Ascending aorta (tissue), 2 donors: ENCODE measurements at regions of chr9 and their contacts with region 1.

Region 1: DNA sequence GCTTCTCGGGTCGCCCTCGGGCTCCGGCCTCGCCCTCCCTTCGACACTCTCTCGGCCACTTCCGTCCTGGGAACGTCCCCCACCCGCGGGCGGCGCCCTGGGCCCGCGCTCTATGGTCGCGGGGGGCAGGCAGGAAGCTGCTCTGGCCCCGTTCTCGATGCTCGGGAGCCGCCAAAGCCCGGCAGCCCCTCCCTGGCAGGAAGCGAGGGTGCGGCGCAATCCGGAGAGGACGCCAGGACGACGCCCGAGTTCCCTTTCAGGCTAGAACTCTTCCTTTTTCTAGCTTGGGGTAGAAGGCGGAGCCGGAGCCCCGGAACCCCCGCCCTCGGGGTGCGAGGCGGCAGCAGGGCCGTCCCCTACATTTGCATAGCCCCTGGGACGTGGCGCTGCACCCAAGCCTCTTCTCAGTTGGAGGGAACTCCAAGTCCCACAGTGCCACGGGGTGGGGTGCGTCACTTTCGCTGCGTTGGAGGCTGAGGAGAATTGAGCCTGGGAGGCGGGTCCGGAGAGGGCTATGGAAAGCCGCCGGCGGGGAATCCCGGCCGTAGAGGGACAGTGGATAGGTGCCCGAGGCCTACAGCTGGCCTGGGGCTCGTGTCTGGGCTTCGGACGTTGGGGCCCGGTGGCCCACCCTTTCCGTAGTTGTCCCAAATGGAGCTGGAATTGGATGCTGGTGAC is at the starts of genes CREB3 and TLN1:
- DNase-seq: peak; percentile 98 to 100
- H3K4me3 ChIP-seq: peak within 1 kb of the TSS; percentile 74 to 81
- H3K27ac ChIP-seq: peak within 1 kb of the TSS; percentile 98 to 99
- H3K4me1 ChIP-seq: peaks cover 18 to 28% of the 10 kb centered on the region in 2 donors
- H3K27me3 ChIP-seq: no peaks in the 10 kb centered on the region
- CTCF ChIP-seq: no peak
- total RNA-seq, gene CREB3: 48.3 TPM
- total RNA-seq, gene TLN1: 735 TPM

Region 2: DNA sequence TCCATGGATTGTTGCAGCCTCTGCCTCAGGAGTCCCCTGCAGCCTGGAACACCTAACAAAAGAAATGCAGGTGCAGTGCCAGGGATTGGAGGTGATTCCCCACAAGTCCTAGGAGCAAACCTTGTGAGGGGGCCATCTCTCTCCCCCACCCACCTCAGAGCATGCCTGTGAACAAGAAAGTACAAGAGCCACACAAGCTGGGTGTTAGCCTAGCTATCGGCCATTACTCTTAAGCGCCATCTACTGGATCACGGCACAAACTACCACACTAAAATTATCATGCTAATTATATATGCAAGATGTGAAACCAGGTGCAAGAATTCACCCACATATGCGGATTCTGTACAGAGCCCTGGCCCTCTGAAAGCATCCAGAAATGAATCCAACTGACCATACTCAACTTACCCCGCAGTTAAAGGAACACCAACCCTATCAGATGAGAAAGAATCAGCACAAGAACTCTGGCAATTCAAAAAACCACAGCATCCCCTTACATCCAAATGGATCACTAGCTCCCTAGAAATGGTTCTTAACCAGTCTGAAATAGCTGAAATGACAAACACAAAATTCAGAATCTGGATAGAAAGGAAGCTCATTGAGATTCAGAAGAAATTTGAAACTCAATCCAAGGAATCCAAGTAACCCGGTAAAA is 1953.4 kb before region 1 on chr9:
- intact Hi-C with region 1: no loop called
- DNase-seq: no peak
- H3K4me3 ChIP-seq: no peak overlapping the region
- H3K27ac ChIP-seq: no peak overlapping the region
- H3K4me1 ChIP-seq: no peaks in the 10 kb centered on the region
- H3K27me3 ChIP-seq: no peaks in the 10 kb centered on the region
- CTCF ChIP-seq: peak; percentile 13 to 73 (median 66)

Region 3: DNA sequence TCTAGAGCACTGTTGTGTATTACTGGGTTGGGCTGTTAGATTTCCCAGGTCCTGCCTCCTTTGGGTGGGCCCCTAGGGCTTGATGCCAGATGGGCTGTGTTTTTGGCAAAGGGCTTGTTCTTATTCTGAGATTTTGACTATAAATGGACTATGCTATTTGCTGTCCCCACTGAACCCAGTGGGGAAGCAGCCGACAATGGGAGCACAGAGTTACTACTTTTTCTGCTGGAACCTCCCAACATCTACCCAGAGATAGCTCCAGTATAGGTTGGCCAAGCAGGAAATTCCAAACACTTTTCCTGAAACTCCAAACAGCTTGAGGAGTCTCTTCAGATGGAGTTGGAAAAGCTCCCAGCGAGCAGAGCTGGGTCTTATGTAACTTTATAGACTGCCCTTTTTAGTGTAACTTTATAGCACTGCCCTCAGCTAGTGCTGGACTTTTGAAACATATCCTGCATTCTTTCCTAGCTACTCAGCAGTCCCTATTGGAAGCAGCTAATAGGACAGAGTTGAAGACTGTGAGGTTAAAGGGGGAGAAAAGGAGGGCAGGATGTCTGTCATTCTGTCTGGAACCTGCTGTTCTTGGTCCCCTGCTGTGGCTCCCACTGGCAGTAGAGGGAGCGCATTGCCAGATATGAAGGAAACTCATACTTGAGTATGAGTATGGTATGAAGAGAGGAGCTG is 221.4 kb before region 1 on chr9:
- intact Hi-C with region 1: loop called (anchors 1 kb)
- DNase-seq: peak; percentile 53 to 94
- H3K4me3 ChIP-seq: peak overlapping the region in 1 of 2 donors; percentile 22
- H3K27ac ChIP-seq: peak overlapping the region; percentile 94 to 95
- H3K4me1 ChIP-seq: peaks cover 13 to 65% of the 10 kb centered on the region in 2 donors
- H3K27me3 ChIP-seq: no peaks in the 10 kb centered on the region
- CTCF ChIP-seq: peak; percentile 39 to 52 (median 42)

Region 4: DNA sequence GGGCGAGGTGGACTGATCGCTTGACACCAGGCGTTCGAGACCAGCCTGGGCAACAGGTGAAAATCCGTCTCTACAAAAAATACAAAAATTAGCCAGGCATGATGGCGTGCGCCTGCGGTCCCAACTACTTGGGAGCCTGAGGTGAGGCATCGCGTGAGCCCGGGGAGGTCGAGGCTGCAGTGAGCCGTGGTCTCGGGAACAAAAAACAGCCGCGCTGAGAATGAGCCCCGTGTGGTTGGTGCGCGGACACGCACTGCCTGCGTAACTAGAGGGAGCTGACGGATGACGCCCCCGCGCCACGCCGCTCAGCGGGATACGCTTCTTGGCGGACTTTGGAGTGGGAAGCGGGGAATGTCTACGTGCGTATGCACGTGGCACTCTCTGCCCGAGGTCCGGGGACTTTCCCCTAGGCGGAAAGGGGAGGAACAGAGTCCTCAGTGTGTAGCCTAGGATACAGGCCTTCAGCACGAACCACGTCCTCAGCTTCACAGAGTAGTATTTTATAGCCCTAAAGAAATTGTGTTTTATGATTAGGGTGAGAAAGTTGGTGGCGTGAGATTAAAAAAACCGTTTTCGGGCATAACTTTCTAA is 74.6 kb before region 1 on chr9 and contains the start of gene RMRP:
- intact Hi-C with region 1: loop called (anchors 1 kb)
- DNase-seq: peak; percentile 90 to 99
- H3K4me3 ChIP-seq: peak within 1 kb of the TSS; percentile 88 to 99
- H3K27ac ChIP-seq: peak within 1 kb of the TSS; percentile 97 to 100
- H3K4me1 ChIP-seq: peaks cover 5 to 35% of the 10 kb centered on the region in 2 donors
- H3K27me3 ChIP-seq: no peaks in the 10 kb centered on the region
- CTCF ChIP-seq: peak; percentile 32 to 56 (median 34)
- total RNA-seq, gene RMRP: 17,070 TPM

Region 5: DNA sequence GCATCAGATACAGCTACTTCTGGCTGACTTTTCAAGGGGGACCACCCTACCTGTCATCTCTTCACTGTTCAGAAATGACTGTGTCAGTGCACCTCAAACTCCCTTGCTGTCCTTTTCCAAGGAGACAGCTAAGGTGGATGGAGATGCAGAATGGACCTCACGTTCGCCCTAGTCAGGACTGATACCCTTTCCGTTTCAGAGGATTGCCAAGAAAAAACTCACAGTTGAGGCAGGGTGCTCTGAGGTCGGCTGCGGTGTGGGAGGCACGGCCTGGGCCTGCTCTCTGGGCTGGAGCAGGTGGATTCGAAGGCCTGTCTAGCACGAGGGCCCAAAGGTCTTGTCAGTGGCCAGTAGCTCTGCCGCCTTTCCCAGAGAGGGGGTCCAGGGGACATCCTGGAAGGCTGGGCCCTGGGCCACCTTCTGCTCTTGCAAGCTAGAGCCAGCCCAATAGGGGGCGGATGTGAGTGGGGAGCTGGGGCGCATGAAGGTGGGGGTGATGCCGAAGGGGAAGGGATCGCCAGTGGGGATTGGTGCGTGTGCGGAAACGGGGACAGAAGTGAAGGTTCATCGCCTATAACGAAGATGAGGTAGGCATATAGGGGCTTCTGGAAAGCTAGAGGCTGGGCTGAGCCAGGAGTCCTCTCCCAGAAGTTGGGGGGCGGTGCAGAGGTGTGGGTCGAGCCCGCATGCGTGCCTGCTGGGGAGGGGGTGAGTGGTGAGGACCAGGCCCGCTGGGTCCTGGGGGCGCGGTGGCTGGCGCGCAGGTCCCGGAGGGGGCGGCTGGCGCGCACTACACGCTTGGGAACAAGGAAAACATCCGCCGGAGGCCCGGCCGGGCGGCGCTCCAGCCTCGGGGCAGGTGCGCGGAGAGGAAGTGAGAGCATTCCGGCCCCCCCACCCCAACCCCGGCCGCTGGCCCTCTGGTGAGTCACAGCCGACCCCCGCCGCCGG is 24.3 kb after region 1 on chr9:
- intact Hi-C with region 1: loop called (anchors 2 kb)
- DNase-seq: peak; percentile 47 to 86
- H3K4me3 ChIP-seq: peak overlapping the region; percentile 63 to 71
- H3K27ac ChIP-seq: peak overlapping the region; percentile 98
- H3K4me1 ChIP-seq: peaks cover 5 to 31% of the 10 kb centered on the region in 2 donors
- H3K27me3 ChIP-seq: no peaks in the 10 kb centered on the region
- CTCF ChIP-seq: peak; percentile 38 to 74 (median 70)

Region 6: GRCh38 chr9:35882263-35882848 is 150.1 kb after region 1 on chr9:
- intact Hi-C with region 1: loop called (anchors 5 kb)
- DNase-seq: peak in 1 of 2 donors; percentile 90
- H3K4me3 ChIP-seq: no peak overlapping the region
- H3K27ac ChIP-seq: no peak overlapping the region
- H3K4me1 ChIP-seq: no peaks in the 10 kb centered on the region
- H3K27me3 ChIP-seq: no peaks in the 10 kb centered on the region
- CTCF ChIP-seq: peak; percentile 90 to 96 (median 91)